ENCODE measurements at regions of chr3 and their contacts with region 1.

Region 1: GRCh38 chr3:20185701-20186598 is at the start of gene SGO1:
- DNase-seq: peak; percentile 99
- H3K4me3 ChIP-seq: peak within 1 kb of the TSS; percentile 87
- H3K27ac ChIP-seq: peak within 1 kb of the TSS; percentile 93
- H3K4me1 ChIP-seq: peaks cover 21% of the 10 kb centered on the region
- CTCF ChIP-seq: no peak
- total RNA-seq, gene SGO1: 21.4 and 27.6 TPM in 2 replicates

Region 2: DNA sequence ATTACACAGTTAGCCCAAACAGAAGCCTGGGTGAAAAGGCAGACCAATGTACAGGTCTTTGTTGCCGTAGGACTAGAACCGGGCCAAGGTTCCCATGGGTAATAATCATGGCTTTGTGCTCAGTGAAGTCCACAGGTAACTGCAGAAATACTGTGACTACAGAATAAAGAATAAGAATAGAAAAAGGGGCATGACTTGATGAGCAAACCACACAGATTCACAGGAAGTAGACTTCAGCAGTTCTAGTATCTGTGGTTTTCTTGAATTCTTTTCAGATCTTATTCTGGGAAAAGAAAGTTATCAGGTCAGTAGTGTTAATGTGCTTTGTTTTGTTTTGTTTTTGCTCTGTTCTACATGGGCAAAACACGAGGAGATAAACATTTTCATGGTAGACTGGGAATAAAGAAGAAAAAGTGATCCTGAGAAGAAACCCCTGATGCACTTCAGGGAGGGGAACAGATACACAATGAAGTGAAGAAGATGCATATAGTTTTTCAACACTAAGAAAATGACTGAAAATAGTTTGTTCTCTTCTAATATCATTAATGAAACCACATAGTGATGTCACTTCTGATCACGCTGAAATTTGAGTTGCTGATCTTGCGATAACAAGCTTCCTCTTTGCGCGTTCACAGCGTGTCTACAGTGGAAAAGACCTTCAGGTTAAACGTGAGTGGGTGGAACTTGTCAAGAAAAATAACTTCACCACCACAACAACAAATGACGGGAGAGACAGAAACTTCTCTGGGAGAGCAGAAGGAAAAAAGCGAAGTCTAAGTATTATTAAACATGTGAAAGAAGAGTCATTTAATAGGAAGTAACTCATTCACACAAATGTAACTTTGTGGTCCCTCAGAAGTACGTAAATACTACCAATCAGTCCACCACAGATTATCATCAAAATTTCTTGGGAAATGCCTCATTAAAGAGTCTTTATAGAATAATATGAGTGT is 1445.0 kb before region 1 on chr3:
- CTCF ChIA-PET with region 1: no interaction called
- POLR2A ChIA-PET with region 1: no interaction called
- intact Hi-C with region 1: loop called (anchors 10 kb)
- DNase-seq: peak; percentile 76
- H3K4me3 ChIP-seq: peak overlapping the region; percentile 60
- H3K27ac ChIP-seq: peak overlapping the region; percentile 91
- H3K4me1 ChIP-seq: peaks cover 73% of the 10 kb centered on the region
- CTCF ChIP-seq: no peak

Region 3: DNA sequence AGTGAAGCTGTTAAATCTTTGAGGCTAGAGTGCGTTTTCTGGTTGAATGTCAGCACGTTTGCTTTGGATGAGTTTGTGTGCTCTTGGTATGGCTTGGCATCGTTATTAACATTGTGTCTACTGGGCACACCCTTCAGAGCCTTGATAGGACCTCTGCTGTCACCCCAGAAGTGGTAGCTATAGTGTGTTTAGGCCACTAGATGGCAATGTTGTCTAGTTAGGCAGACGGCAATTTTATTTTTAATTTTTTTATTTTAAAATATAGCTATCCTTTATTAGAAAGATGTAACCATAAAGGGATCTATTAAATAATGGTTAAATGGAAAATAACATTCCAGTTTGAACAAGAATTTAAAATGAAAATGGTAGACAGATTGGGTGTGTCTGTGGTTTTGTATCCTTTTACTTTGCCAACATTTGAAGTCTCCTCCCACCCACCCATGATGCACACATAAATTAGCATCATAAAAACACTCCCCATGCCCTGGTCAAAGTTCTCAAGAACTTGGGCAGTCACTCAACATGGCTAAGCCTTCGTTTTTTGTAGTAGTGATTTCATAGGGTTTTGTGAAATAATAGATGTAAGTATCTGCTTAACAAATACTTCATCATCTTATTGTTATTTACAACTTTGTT is 836.9 kb before region 1 on chr3:
- CTCF ChIA-PET with region 1: no interaction called
- POLR2A ChIA-PET with region 1: no interaction called
- intact Hi-C with region 1: loop called (anchors 5 kb)
- DNase-seq: peak; percentile 77
- H3K4me3 ChIP-seq: no peak overlapping the region
- H3K27ac ChIP-seq: peak overlapping the region; percentile 61
- H3K4me1 ChIP-seq: peaks cover 47% of the 10 kb centered on the region
- CTCF ChIP-seq: peak; percentile 93

Region 4: GRCh38 chr3:20039766-20040475 is 146.0 kb before region 1 on chr3 and contains the start of gene KAT2B:
- CTCF ChIA-PET with region 1: no interaction called
- POLR2A ChIA-PET with region 1: interaction called, 29 read pairs
- intact Hi-C with region 1: loop called (anchors 1 kb)
- DNase-seq: peak; percentile 93
- H3K4me3 ChIP-seq: peak within 1 kb of the TSS; percentile 94
- H3K27ac ChIP-seq: peak within 1 kb of the TSS; percentile 93
- H3K4me1 ChIP-seq: peaks cover 51% of the 10 kb centered on the region
- CTCF ChIP-seq: peak; percentile 78
- total RNA-seq, gene KAT2B: 19.2 and 24.2 TPM in 2 replicates

Region 5: GRCh38 chr3:20104167-20104661 is 81.7 kb before region 1 on chr3:
- CTCF ChIA-PET with region 1: no interaction called
- POLR2A ChIA-PET with region 1: no interaction called
- intact Hi-C with region 1: no loop called
- DNase-seq: no peak
- H3K4me3 ChIP-seq: no peak overlapping the region
- H3K27ac ChIP-seq: no peak overlapping the region
- H3K4me1 ChIP-seq: peaks cover 3% of the 10 kb centered on the region
- CTCF ChIP-seq: no peak

Region 6: DNA sequence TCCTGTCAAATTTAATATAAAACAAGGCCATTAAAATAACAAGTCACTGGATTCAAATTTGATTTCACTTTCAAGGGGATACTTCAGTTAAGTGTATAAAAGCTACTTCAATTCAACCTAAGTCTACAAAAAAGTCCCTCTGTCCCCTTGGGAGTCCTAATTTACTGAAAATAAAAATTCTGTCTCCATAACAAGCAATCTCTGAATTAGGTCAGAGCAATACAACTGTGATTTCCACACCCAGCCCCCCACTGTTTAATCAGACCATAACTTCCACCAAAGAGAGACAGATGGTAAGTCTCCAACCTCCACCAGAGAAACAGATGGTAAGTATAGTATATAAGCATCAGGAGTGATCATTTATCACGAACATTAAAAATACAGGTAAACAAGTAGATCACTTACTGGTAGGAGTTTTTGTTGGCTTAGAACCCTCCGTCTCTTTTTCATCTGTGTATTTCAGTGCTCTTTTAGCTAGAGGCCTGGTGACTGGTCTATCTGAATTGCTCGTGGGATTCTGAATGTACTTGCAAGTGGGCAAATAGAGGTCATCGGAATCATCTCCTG is 12.0 kb before region 1 on chr3:
- CTCF ChIA-PET with region 1: no interaction called
- POLR2A ChIA-PET with region 1: interaction called, 26 read pairs
- intact Hi-C with region 1: no loop called
- DNase-seq: no peak
- H3K4me3 ChIP-seq: no peak overlapping the region
- H3K27ac ChIP-seq: no peak overlapping the region
- H3K4me1 ChIP-seq: no peaks in the 10 kb centered on the region
- CTCF ChIP-seq: no peak

Region 7: GRCh38 chr3:20215636-20216035 is 29.7 kb after region 1 on chr3:
- CTCF ChIA-PET with region 1: no interaction called
- POLR2A ChIA-PET with region 1: no interaction called
- intact Hi-C with region 1: no loop called
- DNase-seq: no peak
- H3K4me3 ChIP-seq: no peak overlapping the region
- H3K27ac ChIP-seq: no peak overlapping the region
- H3K4me1 ChIP-seq: no peaks in the 10 kb centered on the region
- CTCF ChIP-seq: no peak

Region 8: DNA sequence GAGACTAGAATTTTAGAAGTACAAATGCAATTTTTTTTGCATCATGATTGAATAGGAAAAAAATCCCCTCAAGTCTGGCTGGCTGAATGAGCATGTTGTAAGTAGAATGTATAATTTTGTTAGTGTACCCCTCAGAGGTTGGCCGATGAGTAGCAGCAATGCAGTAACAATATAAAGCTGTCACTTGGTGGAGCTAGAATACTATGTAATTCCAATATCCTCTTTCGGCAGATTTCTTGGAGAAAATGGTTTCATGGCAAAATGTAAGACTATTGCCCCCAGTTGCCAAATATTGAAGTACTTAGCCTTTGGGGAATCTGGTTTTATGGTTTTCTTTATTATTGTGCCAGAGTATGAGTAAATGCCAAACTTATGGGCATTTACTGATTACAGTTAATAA is 39.8 kb after region 1 on chr3:
- CTCF ChIA-PET with region 1: no interaction called
- POLR2A ChIA-PET with region 1: no interaction called
- intact Hi-C with region 1: no loop called
- DNase-seq: peak; percentile 10
- H3K4me3 ChIP-seq: no peak overlapping the region
- H3K27ac ChIP-seq: no peak overlapping the region
- H3K4me1 ChIP-seq: no peaks in the 10 kb centered on the region
- CTCF ChIP-seq: peak; percentile 50

Region 9: GRCh38 chr3:20589275-20589674 is 403.3 kb after region 1 on chr3:
- CTCF ChIA-PET with region 1: no interaction called
- POLR2A ChIA-PET with region 1: no interaction called
- intact Hi-C with region 1: no loop called
- DNase-seq: no peak
- H3K4me3 ChIP-seq: no peak overlapping the region
- H3K27ac ChIP-seq: no peak overlapping the region
- H3K4me1 ChIP-seq: no peaks in the 10 kb centered on the region
- CTCF ChIP-seq: no peak